Mammary epithelial cell (primary cell): ENCODE measurements at regions of chr10 and their contacts with region 1.

Region 1: GRCh38 chr10:89185658-89186057 is 21.5 kb downstream of the CH25H start:
- DNase-seq: no peak
- H3K4me3 ChIP-seq: no peak overlapping the region
- H3K27ac ChIP-seq: no peak overlapping the region
- H3K4me1 ChIP-seq: no peaks in the 10 kb centered on the region
- H3K27me3 ChIP-seq: no peaks in the 10 kb centered on the region
- CTCF ChIP-seq: no peak

Region 2: GRCh38 chr10:89115876-89116627 is 69.6 kb before region 1 on chr10:
- CTCF ChIA-PET with region 1: no interaction called
- dilution Hi-C with region 1: loop called (anchors 5 kb)
- in situ Hi-C with region 1: no loop called
- intact Hi-C with region 1: no loop called
- DNase-seq: peak; percentile 80
- H3K4me3 ChIP-seq: no peak overlapping the region
- H3K27ac ChIP-seq: no peak overlapping the region
- H3K4me1 ChIP-seq: peaks cover 32% of the 10 kb centered on the region
- H3K27me3 ChIP-seq: no peaks in the 10 kb centered on the region
- CTCF ChIP-seq: no peak